ENCODE measurements at regions of chr3 and their contacts with region 1.

Region 1: DNA sequence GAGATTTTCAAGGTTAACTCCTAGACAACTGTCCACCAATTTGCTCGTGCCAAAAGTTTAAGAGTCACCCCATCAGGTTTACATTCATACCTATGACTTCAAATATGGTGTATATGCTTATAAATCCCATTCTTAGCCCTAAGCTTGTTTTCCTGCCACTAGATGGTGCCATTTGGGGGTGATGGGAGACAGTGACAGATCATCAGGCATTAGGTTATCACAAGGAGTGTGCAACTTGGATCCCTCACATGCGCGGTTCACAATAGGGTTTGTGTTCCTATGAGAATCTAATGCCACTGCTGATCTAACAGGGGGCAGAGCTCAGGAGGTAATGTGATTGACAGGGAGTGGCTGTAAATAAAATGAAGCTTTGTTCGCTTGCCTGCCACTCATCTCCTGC is 182.7 kb downstream of the CNTN6 start:
- DNase-seq: no peak
- H3K4me3 ChIP-seq: no peak overlapping the region
- H3K27ac ChIP-seq: no peak overlapping the region
- H3K4me1 ChIP-seq: no peaks in the 10 kb centered on the region
- H3K27me3 ChIP-seq: no peaks in the 10 kb centered on the region
- CTCF ChIP-seq: no peak
- POLR2A ChIP-seq: no peak

Region 2: GRCh38 chr3:1251282-1252060 is 24.0 kb before region 1 on chr3:
- CTCF ChIA-PET with region 1: no interaction called
- POLR2A ChIA-PET with region 1: no interaction called
- dilution Hi-C with region 1: no loop called
- intact Hi-C with region 1: loop called (anchors 1 kb)
- DNase-seq: no peak
- H3K4me3 ChIP-seq: no peak overlapping the region
- H3K27ac ChIP-seq: no peak overlapping the region
- H3K4me1 ChIP-seq: no peaks in the 10 kb centered on the region
- H3K27me3 ChIP-seq: no peaks in the 10 kb centered on the region
- CTCF ChIP-seq: no peak
- POLR2A ChIP-seq: no peak